ENCODE measurements at regions of chr12 and their contacts with region 1.

Region 1: DNA sequence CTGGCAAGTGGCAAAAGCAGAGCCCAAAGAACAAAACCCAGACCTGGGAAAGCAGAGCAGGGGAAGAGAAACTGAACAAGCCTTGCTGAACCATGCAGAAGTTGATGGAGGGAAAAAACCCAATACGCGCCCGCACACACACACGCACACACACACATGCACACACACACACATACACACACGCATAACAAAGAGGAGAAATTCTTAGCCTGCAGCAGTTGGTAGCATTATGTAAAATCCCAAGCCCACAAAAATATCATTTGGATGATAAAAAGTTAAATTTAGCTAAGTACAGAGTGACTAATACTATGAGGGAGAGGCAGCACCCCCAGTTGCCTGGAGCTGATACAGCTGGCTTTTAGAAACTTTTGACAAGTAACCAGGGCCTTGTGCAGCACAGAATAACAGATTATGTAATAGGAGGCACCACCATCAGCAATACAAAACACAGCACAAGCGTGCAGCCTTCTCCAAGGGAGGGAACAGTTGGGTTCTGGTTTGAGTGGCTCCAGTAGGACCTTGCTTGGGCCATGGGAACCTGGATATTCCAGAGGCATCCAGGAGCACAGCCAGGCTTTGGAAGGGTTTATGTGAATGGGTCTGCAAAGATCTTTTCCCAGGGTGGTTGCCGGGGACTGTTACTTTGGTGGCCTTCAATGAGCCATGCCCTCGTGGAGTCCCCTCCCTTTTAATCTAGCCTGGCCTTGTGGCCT is 35.3 kb downstream of the PITPNM2 start:
- DNase-seq: peak in 7 of 9 donors; percentile 54 to 79 (median 70)
- ATAC-seq: peak; percentile 78
- H3K4me3 ChIP-seq: no peak overlapping the region
- H3K4me3 Mint-ChIP-seq: peak overlapping the region; percentile 38 to 81 (median 74)
- H3K27ac ChIP-seq: peak overlapping the region; percentile 69
- H3K27ac Mint-ChIP-seq: peak overlapping the region; percentile 41 to 100 (median 95)
- H3K4me1 ChIP-seq: peaks cover 3 to 59% of the 10 kb centered on the region in 2 donors
- H3K4me1 Mint-ChIP-seq: peaks cover 40 to 92% (median 85%) of the 10 kb centered on the region in 7 donors
- H3K27me3 ChIP-seq: no peaks in the 10 kb centered on the region
- H3K27me3 Mint-ChIP-seq: no peaks in the 10 kb centered on the region

Region 2: DNA sequence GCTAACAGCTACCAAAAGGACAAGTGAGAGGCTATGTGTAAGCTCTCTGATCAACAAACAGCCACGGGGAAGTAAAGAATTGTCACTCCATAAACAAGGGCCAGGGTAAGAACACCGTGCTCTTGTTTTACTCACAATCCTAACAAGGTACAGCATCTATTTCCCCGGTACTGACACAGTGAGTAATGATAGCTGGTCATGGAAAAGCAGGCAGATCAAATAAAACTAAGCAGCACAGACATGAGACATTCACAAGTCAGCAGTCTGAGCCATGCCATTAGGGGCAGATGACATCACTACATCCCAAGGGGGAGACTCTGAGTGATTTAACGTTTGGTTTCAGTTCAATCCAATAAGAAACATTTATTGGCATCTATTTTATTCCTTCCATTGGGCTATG is 80.7 kb before region 1 on chr12:
- CTCF ChIA-PET with region 1: interaction called, 10 read pairs
- POLR2A ChIA-PET with region 1: interaction called, 3 read pairs
- intact Hi-C with region 1: no loop called
- DNase-seq: peak in 2 of 9 donors; percentile 13 to 50
- ATAC-seq: no peak
- H3K4me3 ChIP-seq: no peak overlapping the region
- H3K4me3 Mint-ChIP-seq: peak overlapping the region in 7 of 10 donors; percentile 7 to 83 (median 61)
- H3K27ac ChIP-seq: no peak overlapping the region
- H3K27ac Mint-ChIP-seq: peak overlapping the region in 8 of 9 donors; percentile 38 to 81 (median 60)
- H3K4me1 ChIP-seq: peaks cover 0 to 22% of the 10 kb centered on the region in 2 donors
- H3K4me1 Mint-ChIP-seq: peaks cover 14 to 60% (median 31%) of the 10 kb centered on the region in 7 donors
- H3K27me3 ChIP-seq: no peaks in the 10 kb centered on the region
- H3K27me3 Mint-ChIP-seq: no peaks in the 10 kb centered on the region

Region 3: GRCh38 chr12:123043536-123044001 is 72.0 kb before region 1 on chr12:
- CTCF ChIA-PET with region 1: interaction called, 15 read pairs
- POLR2A ChIA-PET with region 1: interaction called, 5 read pairs
- intact Hi-C with region 1: loop called in 1 of 2 experiments (anchors 2 kb)
- DNase-seq: peak; percentile 36 to 83 (median 71)
- ATAC-seq: peak; percentile 92
- H3K4me3 ChIP-seq: no peak overlapping the region
- H3K4me3 Mint-ChIP-seq: peak overlapping the region in 9 of 10 donors; percentile 13 to 69 (median 56)
- H3K27ac ChIP-seq: peak overlapping the region; percentile 38
- H3K27ac Mint-ChIP-seq: peak overlapping the region; percentile 40 to 95 (median 84)
- H3K4me1 ChIP-seq: peaks cover 10 to 17% of the 10 kb centered on the region in 2 donors
- H3K4me1 Mint-ChIP-seq: peaks cover 27 to 65% (median 52%) of the 10 kb centered on the region in 7 donors
- H3K27me3 ChIP-seq: no peaks in the 10 kb centered on the region
- H3K27me3 Mint-ChIP-seq: no peaks in the 10 kb centered on the region

Region 4: DNA sequence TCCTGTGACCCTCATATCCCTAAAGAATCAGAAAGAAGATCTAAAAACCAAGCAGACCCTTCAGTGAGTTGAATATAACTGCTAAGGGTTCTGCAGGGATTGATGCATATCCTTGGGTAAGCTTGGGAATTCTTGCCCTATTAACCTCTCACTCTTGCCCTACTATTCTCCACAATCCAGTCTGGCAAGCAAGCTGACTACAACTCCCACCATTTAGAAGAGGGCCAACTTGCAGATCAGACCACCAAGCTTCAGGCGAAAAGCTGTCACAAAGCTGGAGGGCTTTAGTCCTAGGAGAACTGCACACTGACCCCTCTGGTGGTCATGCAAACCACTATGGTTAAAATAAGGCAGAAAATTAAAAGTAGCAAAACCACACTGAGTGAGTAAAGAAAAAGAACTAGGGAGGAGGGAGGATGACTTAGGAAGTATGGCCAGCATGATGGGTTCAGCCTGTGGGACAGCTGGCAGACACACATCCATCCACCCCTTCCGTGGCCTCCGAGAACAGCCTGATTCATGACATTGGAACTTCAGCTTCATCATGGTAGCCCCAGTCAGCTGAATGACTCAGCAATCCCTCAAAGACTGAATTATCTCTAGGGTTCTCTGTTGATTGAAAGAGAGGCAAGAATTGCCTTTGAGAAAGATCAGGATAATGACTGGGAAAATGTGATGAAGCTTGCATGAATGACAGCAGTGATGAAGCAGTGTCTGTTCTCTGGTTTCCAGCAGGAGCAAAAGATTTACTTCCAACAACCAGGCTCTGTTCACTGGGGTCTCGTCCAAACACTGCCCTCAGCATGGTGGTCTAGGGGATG is 10.8 kb after region 1 on chr12:
- CTCF ChIA-PET with region 1: interaction called, 4 read pairs
- POLR2A ChIA-PET with region 1: interaction called, 97 read pairs
- intact Hi-C with region 1: no loop called
- DNase-seq: no peak
- ATAC-seq: no peak
- H3K4me3 ChIP-seq: no peak overlapping the region
- H3K4me3 Mint-ChIP-seq: peak overlapping the region in 1 of 10 donors; percentile 27
- H3K27ac ChIP-seq: no peak overlapping the region
- H3K27ac Mint-ChIP-seq: peak overlapping the region in 6 of 9 donors; percentile 2 to 56 (median 31)
- H3K4me1 ChIP-seq: peaks cover 0 to 33% of the 10 kb centered on the region in 2 donors
- H3K4me1 Mint-ChIP-seq: peaks cover 25 to 62% (median 54%) of the 10 kb centered on the region in 7 donors
- H3K27me3 ChIP-seq: no peaks in the 10 kb centered on the region
- H3K27me3 Mint-ChIP-seq: no peaks in the 10 kb centered on the region

Region 5: DNA sequence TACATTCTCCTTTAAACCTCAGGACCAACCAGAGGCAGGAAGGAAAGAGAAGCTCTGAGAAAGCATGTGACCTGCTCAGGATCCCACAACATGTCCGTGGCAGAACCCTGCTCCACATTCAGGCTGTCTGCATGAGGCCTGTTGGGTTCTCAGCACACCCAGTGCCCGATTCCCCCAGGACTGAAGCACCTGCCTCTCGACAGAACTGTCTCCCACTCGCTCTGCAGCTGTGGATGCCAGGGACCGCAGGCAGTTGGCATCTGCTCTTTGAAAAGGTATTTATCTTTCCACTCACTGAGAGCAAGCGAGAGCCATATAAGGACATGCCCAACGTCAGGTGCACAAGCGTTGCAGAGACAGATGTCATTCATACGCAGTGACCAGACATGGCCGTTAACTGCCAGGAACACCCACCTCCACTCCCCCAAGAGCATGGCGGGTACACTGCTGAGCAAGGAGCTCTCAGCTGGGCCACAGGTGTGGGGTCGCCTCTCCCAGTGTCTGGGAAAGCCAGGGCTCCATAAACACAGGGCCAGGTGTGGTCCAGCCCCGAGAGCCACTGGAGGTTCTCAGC is 16.4 kb after region 1 on chr12:
- CTCF ChIA-PET with region 1: interaction called, 4 read pairs
- POLR2A ChIA-PET with region 1: interaction called, 97 read pairs
- intact Hi-C with region 1: loop called in 1 of 2 experiments (anchors 1 kb)
- DNase-seq: peak in 8 of 9 donors; percentile 34 to 83 (median 71)
- ATAC-seq: peak; percentile 96
- H3K4me3 ChIP-seq: peak overlapping the region; percentile 24
- H3K4me3 Mint-ChIP-seq: peak overlapping the region; percentile 75 to 83 (median 79)
- H3K27ac ChIP-seq: peak overlapping the region; percentile 84
- H3K27ac Mint-ChIP-seq: peak overlapping the region; percentile 89 to 98 (median 95)
- H3K4me1 ChIP-seq: peaks cover 0 to 27% of the 10 kb centered on the region in 2 donors
- H3K4me1 Mint-ChIP-seq: peaks cover 24 to 70% (median 55%) of the 10 kb centered on the region in 7 donors
- H3K27me3 ChIP-seq: no peaks in the 10 kb centered on the region
- H3K27me3 Mint-ChIP-seq: no peaks in the 10 kb centered on the region

Measured in naive thymus-derived CD4-positive, alpha-beta T cell (primary cell).